Naive thymus-derived CD4-positive, alpha-beta T cell (primary cell): ENCODE measurements at regions of chr13 and their contacts with region 1.

Region 1: DNA sequence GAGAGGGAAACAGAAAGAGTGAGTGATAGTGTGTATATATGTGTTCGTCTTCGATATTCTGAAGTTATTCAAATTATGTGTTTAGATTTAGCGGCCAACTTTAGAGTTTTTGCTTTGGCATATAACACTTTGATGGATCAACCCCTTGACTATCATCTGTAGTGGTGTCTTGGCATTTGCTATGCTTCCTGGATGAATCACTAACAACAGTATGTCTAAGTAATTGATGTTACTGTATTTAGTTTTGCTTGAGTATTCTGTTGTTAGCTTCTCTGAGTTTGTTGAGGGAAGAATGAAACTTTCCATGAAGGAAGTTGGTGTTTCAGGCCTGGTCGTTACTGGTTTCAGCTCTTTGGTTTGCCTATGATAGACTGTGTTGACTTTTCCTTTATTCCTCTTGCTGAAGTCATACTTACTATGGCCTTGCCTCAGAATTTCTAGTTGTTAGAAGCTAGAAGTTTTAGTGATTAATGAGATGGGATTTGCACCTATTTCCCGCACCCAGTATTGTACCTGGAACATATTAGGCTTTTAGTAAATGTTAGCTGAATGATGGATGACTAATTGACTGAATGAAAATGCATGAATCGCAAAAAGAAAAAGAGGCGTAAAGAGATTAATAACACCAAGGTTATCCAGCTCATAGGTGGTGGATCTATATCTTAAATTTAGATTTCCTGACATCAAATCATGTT is 20.7 kb downstream of the NDFIP2 start:
- DNase-seq: no peak
- ATAC-seq: no peak
- H3K4me3 ChIP-seq: no peak overlapping the region
- H3K4me3 Mint-ChIP-seq: peak overlapping the region in 2 of 10 donors; percentile 3 to 26
- H3K27ac ChIP-seq: no peak overlapping the region
- H3K27ac Mint-ChIP-seq: peak overlapping the region in 1 of 9 donors; percentile 49
- H3K4me1 ChIP-seq: peaks cover 0 to 10% of the 10 kb centered on the region in 2 donors
- H3K4me1 Mint-ChIP-seq: peaks cover 22 to 70% (median 50%) of the 10 kb centered on the region in 7 donors
- H3K27me3 ChIP-seq: no peaks in the 10 kb centered on the region
- H3K27me3 Mint-ChIP-seq: no peaks in the 10 kb centered on the region

Region 2: GRCh38 chr13:79486433-79487188 is 15.1 kb before region 1 on chr13:
- CTCF ChIA-PET with region 1: interaction called, 3 read pairs
- POLR2A ChIA-PET with region 1: interaction called, 3 read pairs
- intact Hi-C with region 1: loop called in 1 of 2 experiments (anchors 2 kb)
- DNase-seq: no peak
- ATAC-seq: no peak
- H3K4me3 ChIP-seq: no peak overlapping the region
- H3K4me3 Mint-ChIP-seq: peak overlapping the region in 1 of 10 donors; percentile 58
- H3K27ac ChIP-seq: no peak overlapping the region
- H3K27ac Mint-ChIP-seq: peak overlapping the region in 1 of 9 donors; percentile 66
- H3K4me1 ChIP-seq: peaks cover 6 to 11% of the 10 kb centered on the region in 2 donors
- H3K4me1 Mint-ChIP-seq: peaks cover 27 to 80% (median 62%) of the 10 kb centered on the region in 7 donors
- H3K27me3 ChIP-seq: no peaks in the 10 kb centered on the region
- H3K27me3 Mint-ChIP-seq: peaks cover 0 to 4% (median 0%) of the 10 kb centered on the region in 5 donors